ENCODE measurements at regions of chr3 and their contacts with region 1.

Region 1: DNA sequence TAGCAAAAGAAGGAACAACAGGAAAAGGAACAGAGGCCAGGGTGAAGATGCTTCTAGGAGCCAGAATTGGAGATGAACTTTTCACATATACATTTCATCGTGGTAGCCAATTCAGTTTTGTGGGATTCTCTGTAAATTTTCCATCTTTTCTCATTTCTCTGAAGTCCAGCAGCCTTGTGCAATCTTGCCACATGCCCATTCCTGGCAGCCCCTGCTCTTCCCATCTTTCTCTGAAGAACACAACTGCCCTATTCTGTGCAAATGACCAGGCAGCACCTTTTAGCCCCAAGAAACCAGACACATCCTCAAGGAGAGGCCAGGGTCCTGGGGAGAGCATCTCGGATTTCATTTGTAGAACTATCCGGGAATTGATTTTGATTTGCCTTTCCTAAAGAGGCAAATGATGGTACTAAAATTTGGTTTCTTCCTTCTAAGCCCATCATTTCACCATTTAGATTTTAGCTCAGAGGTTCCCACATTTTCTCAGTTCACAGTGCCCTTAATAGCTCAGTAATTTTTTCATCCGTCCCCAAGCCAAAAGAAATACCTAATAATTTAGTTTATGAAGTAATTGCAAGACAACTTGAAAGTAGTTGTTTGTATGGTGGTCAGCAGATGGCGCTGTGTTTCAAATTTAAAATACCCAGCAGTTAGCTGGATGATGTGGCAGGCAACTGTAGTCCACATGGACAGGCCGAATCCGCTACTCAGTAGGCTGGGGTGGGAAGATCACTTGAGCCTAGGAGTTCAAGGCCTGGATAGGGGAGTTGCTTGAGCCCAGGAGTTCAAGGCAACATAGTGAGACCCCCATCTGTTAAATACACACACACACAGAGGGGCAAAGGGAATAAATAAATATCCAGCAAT is 61.3 kb upstream of the ACKR4 start:
- DNase-seq: peak; percentile 70
- H3K4me3 Mint-ChIP-seq: no peak overlapping the region
- H3K27ac Mint-ChIP-seq: no peak overlapping the region
- H3K4me1 Mint-ChIP-seq: peaks cover 4% of the 10 kb centered on the region
- H3K27me3 Mint-ChIP-seq: no peaks in the 10 kb centered on the region
- CTCF ChIP-seq: peak; percentile 50

Region 2: GRCh38 chr3:132164469-132165092 is 371.2 kb before region 1 on chr3:
- CTCF ChIA-PET with region 1: no interaction called
- POLR2A ChIA-PET with region 1: no interaction called
- intact Hi-C with region 1: no loop called
- DNase-seq: peak; percentile 57
- H3K4me3 Mint-ChIP-seq: no peak overlapping the region
- H3K27ac Mint-ChIP-seq: no peak overlapping the region
- H3K4me1 Mint-ChIP-seq: peaks cover 8% of the 10 kb centered on the region
- H3K27me3 Mint-ChIP-seq: no peaks in the 10 kb centered on the region
- CTCF ChIP-seq: no peak

Region 3: DNA sequence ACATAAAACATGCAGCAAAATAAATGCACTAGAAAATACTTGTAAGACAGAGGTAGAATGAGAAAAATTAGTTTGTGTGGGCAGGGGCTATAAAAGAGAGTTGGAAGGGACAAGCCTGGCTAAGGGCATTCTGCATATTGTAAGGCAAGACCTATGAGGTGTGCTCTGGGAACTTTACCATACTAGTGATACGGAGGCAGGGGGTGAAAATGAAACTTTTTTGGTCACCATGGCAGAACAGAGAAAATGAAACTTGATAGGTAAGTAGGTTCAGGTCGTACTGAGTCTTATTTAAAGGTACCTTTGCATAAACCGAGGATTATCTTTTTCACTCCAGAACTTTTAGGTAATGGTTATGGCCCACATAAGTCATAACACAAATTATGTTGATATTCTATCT is 13.5 kb before region 1 on chr3:
- CTCF ChIA-PET with region 1: interaction called, 35 read pairs
- POLR2A ChIA-PET with region 1: no interaction called
- intact Hi-C with region 1: no loop called
- DNase-seq: no peak
- H3K4me3 Mint-ChIP-seq: no peak overlapping the region
- H3K27ac Mint-ChIP-seq: no peak overlapping the region
- H3K4me1 Mint-ChIP-seq: no peaks in the 10 kb centered on the region
- H3K27me3 Mint-ChIP-seq: no peaks in the 10 kb centered on the region
- CTCF ChIP-seq: no peak

Region 4: DNA sequence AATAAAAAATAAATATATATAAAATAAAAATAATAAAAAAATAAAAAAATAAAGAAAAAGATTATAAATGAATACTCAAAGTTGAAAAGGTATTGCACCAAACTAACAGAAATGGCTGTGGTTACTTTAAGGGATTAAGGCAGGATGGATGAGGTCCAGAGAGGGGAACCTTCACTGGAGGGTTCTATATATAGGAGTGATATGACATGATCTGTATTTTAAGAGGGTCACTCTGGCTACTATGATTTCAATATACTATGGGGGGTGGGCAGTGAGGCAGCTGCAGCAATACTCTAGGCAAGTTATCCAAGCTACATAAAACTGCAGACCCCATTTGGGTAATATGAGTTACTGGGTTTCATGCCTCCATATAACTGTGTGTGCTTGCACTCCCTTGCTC is 99.2 kb after region 1 on chr3:
- CTCF ChIA-PET with region 1: interaction called, 284 read pairs
- POLR2A ChIA-PET with region 1: interaction called, 4 read pairs
- intact Hi-C with region 1: no loop called
- DNase-seq: no peak
- H3K4me3 Mint-ChIP-seq: no peak overlapping the region
- H3K27ac Mint-ChIP-seq: no peak overlapping the region
- H3K4me1 Mint-ChIP-seq: peaks cover 16% of the 10 kb centered on the region
- H3K27me3 Mint-ChIP-seq: no peaks in the 10 kb centered on the region
- CTCF ChIP-seq: no peak

Region 5: DNA sequence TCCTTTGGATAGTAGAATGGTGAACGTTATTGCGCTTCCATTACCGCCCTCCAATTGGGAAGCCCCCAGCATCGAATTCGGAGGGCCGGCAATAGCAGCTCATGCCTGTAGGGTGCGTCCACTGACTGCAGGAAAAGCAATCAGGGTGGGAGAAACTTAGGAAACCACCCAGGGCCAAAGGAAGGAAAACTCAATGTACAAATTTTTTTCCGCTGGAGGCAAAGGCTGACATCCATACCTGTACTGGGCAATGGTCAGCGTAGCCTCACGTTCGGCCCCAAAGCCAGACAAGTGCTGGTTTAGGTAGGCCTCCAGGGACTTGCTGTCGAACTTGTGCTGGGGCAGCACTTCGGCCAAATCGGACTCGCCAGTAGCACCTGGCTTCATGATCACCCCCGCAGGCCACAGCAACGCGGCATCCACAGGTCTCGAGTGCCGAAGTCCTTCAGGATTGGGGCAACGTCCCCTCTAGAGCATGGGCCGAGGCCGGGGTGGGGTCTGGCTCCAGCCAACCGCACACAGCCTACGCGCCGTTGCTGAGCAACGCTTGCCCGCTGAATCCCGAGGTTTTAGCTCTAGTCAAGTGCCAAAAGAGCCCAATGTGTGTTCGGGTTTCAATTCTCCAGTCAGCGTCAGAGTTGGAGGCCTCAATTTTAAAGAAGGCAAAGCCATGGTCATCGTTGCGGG is 123.7 kb after region 1 on chr3 and contains the start of gene ACAD11:
- CTCF ChIA-PET with region 1: interaction called, 6 read pairs
- POLR2A ChIA-PET with region 1: interaction called, 5 read pairs
- intact Hi-C with region 1: loop called (anchors 1 kb)
- DNase-seq: peak; percentile 72
- H3K4me3 Mint-ChIP-seq: peak within 1 kb of the TSS; percentile 89
- H3K27ac Mint-ChIP-seq: peak within 1 kb of the TSS; percentile 99
- H3K4me1 Mint-ChIP-seq: peaks cover 26% of the 10 kb centered on the region
- H3K27me3 Mint-ChIP-seq: no peaks in the 10 kb centered on the region
- CTCF ChIP-seq: peak; percentile 45
- total RNA-seq, gene ACAD11: 30.9 and 31.9 TPM in 2 replicates